ENCODE measurements at regions of chr6 and their contacts with region 1.

Region 1: DNA sequence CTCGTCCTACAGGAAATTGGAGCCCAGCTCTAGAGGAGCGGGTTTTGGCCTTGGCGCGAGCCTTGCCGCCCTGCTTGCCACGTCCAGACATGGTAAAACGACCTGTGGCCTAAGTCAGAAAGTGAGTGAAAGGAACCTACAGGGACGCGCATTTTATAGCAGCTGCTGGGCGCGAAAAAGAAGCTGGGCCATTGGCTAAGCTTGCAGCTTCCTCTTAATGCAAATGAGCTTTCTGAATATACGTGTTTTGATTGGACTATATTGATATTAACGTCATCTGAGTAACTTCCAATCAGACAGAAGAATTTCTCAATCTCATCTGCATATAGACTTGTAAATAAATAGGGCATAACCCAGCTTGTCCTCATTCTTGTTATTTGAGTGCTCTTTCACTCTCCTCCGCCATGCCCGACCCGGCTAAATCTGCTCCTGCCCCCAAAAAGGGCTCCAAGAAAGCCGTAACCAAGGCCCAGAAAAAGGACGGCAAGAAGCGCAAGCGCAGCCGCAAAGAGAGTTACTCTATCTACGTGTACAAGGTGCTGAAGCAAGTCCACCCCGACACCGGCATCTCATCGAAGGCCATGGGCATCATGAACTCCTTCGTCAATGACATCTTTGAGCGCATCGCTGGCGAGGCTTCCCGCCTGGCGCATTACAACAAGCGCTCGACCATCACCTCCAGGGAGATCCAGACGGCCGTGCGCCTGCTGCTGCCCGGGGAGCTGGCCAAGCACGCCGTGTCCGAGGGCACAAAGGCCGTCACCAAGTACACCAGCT is 18.9 kb downstream of the OR2B2 start:
- DNase-seq: peak; percentile 98
- H3K4me3 Mint-ChIP-seq: no peak overlapping the region
- H3K27ac Mint-ChIP-seq: no peak overlapping the region
- H3K4me1 Mint-ChIP-seq: peaks cover 45% of the 10 kb centered on the region
- H3K27me3 Mint-ChIP-seq: no peaks in the 10 kb centered on the region

Region 2: GRCh38 chr6:26031595-26032339 is 1861.5 kb before region 1 on chr6:
- intact Hi-C with region 1: loop called (anchors 5 kb)
- DNase-seq: peak; percentile 97
- H3K4me3 Mint-ChIP-seq: peak overlapping the region; percentile 92
- H3K27ac Mint-ChIP-seq: peak overlapping the region; percentile 97
- H3K4me1 Mint-ChIP-seq: peaks cover 66% of the 10 kb centered on the region
- H3K27me3 Mint-ChIP-seq: peaks cover 3% of the 10 kb centered on the region

Region 3: GRCh38 chr6:26285143-26286134 is 1607.8 kb before region 1 on chr6:
- intact Hi-C with region 1: loop called (anchors 5 kb)
- DNase-seq: peak; percentile 99
- H3K4me3 Mint-ChIP-seq: peak overlapping the region; percentile 87
- H3K27ac Mint-ChIP-seq: peak overlapping the region; percentile 96
- H3K4me1 Mint-ChIP-seq: peaks cover 45% of the 10 kb centered on the region
- H3K27me3 Mint-ChIP-seq: peaks cover 7% of the 10 kb centered on the region

Region 4: DNA sequence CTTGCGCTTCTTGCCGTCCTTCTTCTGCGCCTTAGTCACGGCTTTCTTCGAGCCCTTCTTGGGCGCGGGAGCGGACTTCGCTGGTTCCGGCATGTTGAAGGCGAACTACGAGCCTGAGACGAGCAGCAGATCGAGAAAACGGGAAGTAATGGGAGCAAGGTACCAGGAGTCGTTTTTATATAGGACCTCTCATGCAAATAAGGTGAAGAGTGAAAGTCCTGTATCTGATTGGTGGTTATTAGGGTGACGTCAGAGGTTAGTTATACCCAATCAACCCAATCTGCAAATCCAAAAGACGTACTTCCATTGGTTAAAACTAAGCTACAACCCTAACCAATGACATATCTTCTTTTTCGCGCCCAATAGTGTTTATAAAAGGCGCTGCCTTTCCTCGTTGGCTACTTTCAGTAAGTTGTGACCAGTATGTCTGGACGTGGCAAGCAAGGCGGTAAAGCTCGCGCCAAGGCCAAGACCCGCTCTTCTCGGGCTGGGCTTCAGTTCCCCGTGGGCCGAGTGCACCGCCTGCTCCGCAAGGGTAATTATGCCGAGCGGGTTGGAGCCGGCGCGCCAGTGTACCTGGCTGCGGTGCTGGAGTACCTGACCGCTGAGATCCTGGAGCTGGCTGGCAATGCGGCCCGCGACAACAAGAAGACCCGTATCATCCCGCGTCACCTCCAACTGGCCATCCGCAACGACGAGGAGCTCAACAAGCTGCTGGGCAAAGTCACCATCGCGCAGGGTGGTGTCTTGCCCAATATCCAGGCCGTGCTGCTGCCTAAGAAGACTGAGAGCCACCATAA is 746.3 kb before region 1 on chr6:
- intact Hi-C with region 1: loop called (anchors 1 kb)
- DNase-seq: peak; percentile 95
- H3K4me3 Mint-ChIP-seq: no peak overlapping the region
- H3K27ac Mint-ChIP-seq: no peak overlapping the region
- H3K4me1 Mint-ChIP-seq: peaks cover 18% of the 10 kb centered on the region
- H3K27me3 Mint-ChIP-seq: no peaks in the 10 kb centered on the region

Region 5: GRCh38 chr6:27503436-27504030 is 389.7 kb before region 1 on chr6:
- intact Hi-C with region 1: loop called (anchors 1 kb)
- DNase-seq: peak; percentile 92
- H3K4me3 Mint-ChIP-seq: peak overlapping the region; percentile 94
- H3K27ac Mint-ChIP-seq: peak overlapping the region; percentile 81
- H3K4me1 Mint-ChIP-seq: peaks cover 19% of the 10 kb centered on the region
- H3K27me3 Mint-ChIP-seq: peaks cover 46% of the 10 kb centered on the region

Region 6: GRCh38 chr6:27809939-27810767 is 83.1 kb before region 1 on chr6:
- intact Hi-C with region 1: loop called (anchors 1 kb)
- DNase-seq: peak; percentile 96
- H3K4me3 Mint-ChIP-seq: peak overlapping the region; percentile 87
- H3K27ac Mint-ChIP-seq: peak overlapping the region; percentile 96
- H3K4me1 Mint-ChIP-seq: peaks cover 67% of the 10 kb centered on the region
- H3K27me3 Mint-ChIP-seq: no peaks in the 10 kb centered on the region

Region 7: GRCh38 chr6:27871924-27872638 is 21.2 kb before region 1 on chr6:
- intact Hi-C with region 1: loop called (anchors 1 kb)
- DNase-seq: peak; percentile 97
- H3K4me3 Mint-ChIP-seq: peak overlapping the region; percentile 92
- H3K27ac Mint-ChIP-seq: peak overlapping the region; percentile 96
- H3K4me1 Mint-ChIP-seq: peaks cover 56% of the 10 kb centered on the region
- H3K27me3 Mint-ChIP-seq: peaks cover 2% of the 10 kb centered on the region

Region 8: DNA sequence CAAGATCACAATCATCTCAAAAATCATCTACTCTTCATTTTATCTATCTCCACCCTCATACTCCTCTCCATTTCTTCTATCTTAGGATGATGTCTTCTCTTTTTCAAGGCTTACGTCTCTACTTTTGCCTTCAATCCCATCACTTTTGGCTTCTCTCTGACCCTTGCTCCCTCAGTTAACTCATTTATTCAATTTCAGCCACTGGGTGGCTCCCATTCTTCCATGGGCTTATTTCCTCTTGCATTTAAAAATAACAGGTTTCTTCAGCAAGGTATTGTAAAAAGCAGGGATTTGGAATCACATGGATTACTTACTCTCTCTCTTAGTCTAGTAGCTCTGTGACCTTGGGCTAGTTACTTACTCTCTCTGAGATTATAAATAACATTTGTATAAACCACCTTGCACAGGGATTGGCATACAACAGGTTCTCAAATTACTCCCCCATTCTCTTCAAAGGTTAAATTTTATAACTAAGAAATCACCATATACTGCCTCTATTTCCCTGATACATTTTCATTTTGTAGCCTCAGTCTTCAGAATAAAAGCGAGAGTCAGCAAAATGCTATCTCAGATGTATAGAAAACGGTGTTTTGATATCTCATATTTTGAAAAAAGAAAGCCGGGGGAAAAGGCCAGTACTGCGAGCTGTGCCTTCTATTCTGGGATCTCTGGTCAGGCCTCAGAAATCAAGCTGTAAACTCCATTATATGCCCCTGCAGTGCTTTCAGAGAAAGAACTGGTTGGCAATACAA is 500.8 kb after region 1 on chr6:
- intact Hi-C with region 1: no loop called
- DNase-seq: no peak
- H3K4me3 Mint-ChIP-seq: no peak overlapping the region
- H3K27ac Mint-ChIP-seq: no peak overlapping the region
- H3K4me1 Mint-ChIP-seq: peaks cover 40% of the 10 kb centered on the region
- H3K27me3 Mint-ChIP-seq: no peaks in the 10 kb centered on the region